Caco-2 (cell line): ENCODE measurements at regions of chr13 and their contacts with region 1.

Region 1: GRCh38 chr13:98842864-98843481 is 90.5 kb upstream of the SLC15A1 start:
- DNase-seq: peak; percentile 81 to 85
- H3K4me3 ChIP-seq: no peak overlapping the region
- H3K4me3 Mint-ChIP-seq: no peak overlapping the region
- H3K27ac Mint-ChIP-seq: no peak overlapping the region
- H3K4me1 ChIP-seq: peaks cover 6% of the 10 kb centered on the region; the same call in 1 of the 2 replicates
- H3K4me1 Mint-ChIP-seq: peaks cover 19% of the 10 kb centered on the region
- H3K27me3 ChIP-seq: no peaks in the 10 kb centered on the region
- H3K27me3 Mint-ChIP-seq: no peaks in the 10 kb centered on the region
- CTCF ChIP-seq: peak; percentile 89 to 94

Region 2: DNA sequence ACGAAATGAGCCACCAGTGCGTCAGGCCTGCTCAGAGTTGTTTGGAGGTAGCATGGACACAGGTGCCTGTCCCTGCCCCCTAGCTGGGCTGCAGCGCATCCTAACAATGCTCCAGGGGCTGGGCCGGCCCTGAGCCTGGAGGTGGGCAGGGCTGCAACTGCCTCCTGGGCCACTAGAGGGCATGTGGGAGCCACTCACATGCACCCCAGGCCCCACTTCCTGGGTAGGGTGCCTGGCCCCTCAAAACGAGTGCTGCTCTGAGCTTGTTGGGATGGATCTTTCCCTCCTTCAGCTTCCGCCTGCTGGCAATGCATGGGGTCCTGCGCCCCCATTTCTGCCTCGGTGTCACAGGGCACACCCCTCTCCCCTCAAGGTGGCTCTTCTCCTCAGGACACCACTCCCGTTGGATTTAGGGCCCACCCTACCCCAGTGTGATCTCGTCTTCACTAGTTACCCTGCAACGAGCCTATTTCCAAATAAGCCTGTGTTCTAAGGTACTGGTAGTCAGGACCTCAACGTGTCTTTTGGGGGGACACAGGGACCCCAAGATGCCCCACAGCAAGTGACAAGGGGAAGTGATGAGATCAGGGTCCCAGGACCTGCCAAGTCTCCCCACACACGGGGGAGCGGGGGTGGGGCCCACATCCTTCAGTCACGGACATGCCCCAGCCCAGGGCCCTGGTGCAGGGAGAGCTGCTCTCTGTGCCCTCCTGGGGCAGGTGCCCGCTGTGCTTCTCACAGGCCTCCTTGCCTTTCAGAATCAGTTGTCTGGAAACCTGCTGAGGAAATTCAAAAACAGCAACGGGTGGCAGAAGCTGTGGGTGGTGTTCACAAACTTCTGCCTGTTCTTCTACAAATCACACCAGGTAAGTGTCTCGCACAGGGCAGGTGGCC is 397.4 kb before region 1 on chr13:
- CTCF ChIA-PET with region 1: interaction called, 3 read pairs
- POLR2A ChIA-PET with region 1: no interaction called
- intact Hi-C with region 1: loop called (anchors 1 kb)
- DNase-seq: peak; percentile 77 to 88
- H3K4me3 ChIP-seq: no peak overlapping the region
- H3K4me3 Mint-ChIP-seq: no peak overlapping the region
- H3K27ac Mint-ChIP-seq: peak overlapping the region; percentile 77
- H3K4me1 ChIP-seq: no peaks in the 10 kb centered on the region
- H3K4me1 Mint-ChIP-seq: peaks cover 14% of the 10 kb centered on the region
- H3K27me3 ChIP-seq: no peaks in the 10 kb centered on the region
- H3K27me3 Mint-ChIP-seq: no peaks in the 10 kb centered on the region
- CTCF ChIP-seq: peak; percentile 97 to 99

Region 3: GRCh38 chr13:98556968-98557631 is 285.9 kb before region 1 on chr13:
- CTCF ChIA-PET with region 1: interaction called, 4 read pairs
- POLR2A ChIA-PET with region 1: no interaction called
- intact Hi-C with region 1: loop called (anchors 10 kb)
- DNase-seq: peak in 1 of 2 experiments; percentile 39
- H3K4me3 ChIP-seq: no peak overlapping the region
- H3K4me3 Mint-ChIP-seq: no peak overlapping the region
- H3K27ac Mint-ChIP-seq: peak overlapping the region; percentile 31
- H3K4me1 ChIP-seq: 0 out of 2 replicates have a peak, but pooled peaks cover 3% of the 10 kb centered on the region
- H3K4me1 Mint-ChIP-seq: peaks cover 42% of the 10 kb centered on the region
- H3K27me3 ChIP-seq: no peaks in the 10 kb centered on the region
- H3K27me3 Mint-ChIP-seq: no peaks in the 10 kb centered on the region
- CTCF ChIP-seq: peak in 1 of 2 experiments; percentile 22

Region 4: DNA sequence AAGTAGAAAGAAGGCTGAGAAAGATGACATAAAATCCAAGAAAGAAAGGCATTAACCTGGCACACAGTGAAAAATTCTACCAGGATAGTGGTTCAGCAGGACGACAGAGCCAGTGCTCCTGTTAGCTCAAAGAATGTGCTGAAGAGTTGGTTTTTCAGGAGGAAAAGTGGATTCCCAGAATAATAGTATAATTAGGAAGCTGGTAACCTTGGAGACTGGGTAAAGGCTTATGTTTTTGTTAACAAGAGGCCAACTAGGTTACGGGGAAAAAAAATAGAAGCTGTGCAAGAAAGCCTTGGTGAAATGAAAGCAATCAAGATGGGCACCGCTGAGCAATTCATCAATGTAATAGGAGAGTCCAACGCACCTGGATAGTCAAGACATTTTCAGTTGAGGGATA is 145.2 kb before region 1 on chr13:
- CTCF ChIA-PET with region 1: no interaction called
- POLR2A ChIA-PET with region 1: no interaction called
- intact Hi-C with region 1: no loop called
- DNase-seq: no peak
- H3K4me3 ChIP-seq: no peak overlapping the region
- H3K4me3 Mint-ChIP-seq: no peak overlapping the region
- H3K27ac Mint-ChIP-seq: no peak overlapping the region
- H3K4me1 ChIP-seq: no peaks in the 10 kb centered on the region
- H3K4me1 Mint-ChIP-seq: no peaks in the 10 kb centered on the region
- H3K27me3 ChIP-seq: no peaks in the 10 kb centered on the region
- H3K27me3 Mint-ChIP-seq: no peaks in the 10 kb centered on the region
- CTCF ChIP-seq: no peak

Region 5: DNA sequence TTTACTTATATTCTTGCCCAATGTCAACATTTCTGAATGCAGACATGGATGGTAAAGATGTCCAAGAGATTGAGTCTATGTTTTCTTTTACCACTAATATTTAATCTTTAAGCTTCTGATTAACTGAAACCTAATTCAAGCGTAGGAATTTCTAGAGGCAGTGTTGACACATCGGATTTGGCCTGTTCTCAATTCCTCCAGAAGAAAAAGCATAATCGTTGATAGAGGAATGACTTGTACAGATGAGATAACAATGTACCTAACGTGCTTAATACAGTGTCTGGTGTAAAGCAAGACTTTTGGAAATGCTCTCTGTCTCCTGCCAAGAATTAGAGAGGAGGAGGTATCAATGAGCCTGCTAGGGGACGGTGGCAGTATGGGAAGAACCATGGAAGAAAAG is 125.7 kb before region 1 on chr13:
- CTCF ChIA-PET with region 1: no interaction called
- POLR2A ChIA-PET with region 1: no interaction called
- intact Hi-C with region 1: no loop called
- DNase-seq: no peak
- H3K4me3 ChIP-seq: no peak overlapping the region
- H3K4me3 Mint-ChIP-seq: no peak overlapping the region
- H3K27ac Mint-ChIP-seq: no peak overlapping the region
- H3K4me1 ChIP-seq: no peaks in the 10 kb centered on the region
- H3K4me1 Mint-ChIP-seq: peaks cover 7% of the 10 kb centered on the region
- H3K27me3 ChIP-seq: no peaks in the 10 kb centered on the region
- H3K27me3 Mint-ChIP-seq: no peaks in the 10 kb centered on the region
- CTCF ChIP-seq: no peak

Region 6: GRCh38 chr13:98751861-98752466 is 91.0 kb before region 1 on chr13:
- CTCF ChIA-PET with region 1: no interaction called
- POLR2A ChIA-PET with region 1: no interaction called
- intact Hi-C with region 1: loop called (anchors 5 kb)
- DNase-seq: peak in 1 of 2 experiments; percentile 55
- H3K4me3 ChIP-seq: peak overlapping the region; percentile 81
- H3K4me3 Mint-ChIP-seq: peak overlapping the region; percentile 74
- H3K27ac Mint-ChIP-seq: peak overlapping the region; percentile 62
- H3K4me1 ChIP-seq: peaks cover 12% of the 10 kb centered on the region
- H3K4me1 Mint-ChIP-seq: peaks cover 14% of the 10 kb centered on the region
- H3K27me3 ChIP-seq: no peaks in the 10 kb centered on the region
- H3K27me3 Mint-ChIP-seq: peaks cover 3% of the 10 kb centered on the region
- CTCF ChIP-seq: no peak

Region 7: GRCh38 chr13:99033814-99034213 is 190.8 kb after region 1 on chr13:
- CTCF ChIA-PET with region 1: interaction called, 7 read pairs
- POLR2A ChIA-PET with region 1: no interaction called
- intact Hi-C with region 1: loop called (anchors 1 kb)
- DNase-seq: peak in 1 of 2 experiments; percentile 30
- H3K4me3 ChIP-seq: no peak overlapping the region
- H3K4me3 Mint-ChIP-seq: peak overlapping the region; percentile 24
- H3K27ac Mint-ChIP-seq: peak overlapping the region; percentile 79
- H3K4me1 ChIP-seq: peaks cover 37% of the 10 kb centered on the region
- H3K4me1 Mint-ChIP-seq: peaks cover 29% of the 10 kb centered on the region
- H3K27me3 ChIP-seq: no peaks in the 10 kb centered on the region
- H3K27me3 Mint-ChIP-seq: no peaks in the 10 kb centered on the region
- CTCF ChIP-seq: peak; percentile 54 to 56

Region 8: DNA sequence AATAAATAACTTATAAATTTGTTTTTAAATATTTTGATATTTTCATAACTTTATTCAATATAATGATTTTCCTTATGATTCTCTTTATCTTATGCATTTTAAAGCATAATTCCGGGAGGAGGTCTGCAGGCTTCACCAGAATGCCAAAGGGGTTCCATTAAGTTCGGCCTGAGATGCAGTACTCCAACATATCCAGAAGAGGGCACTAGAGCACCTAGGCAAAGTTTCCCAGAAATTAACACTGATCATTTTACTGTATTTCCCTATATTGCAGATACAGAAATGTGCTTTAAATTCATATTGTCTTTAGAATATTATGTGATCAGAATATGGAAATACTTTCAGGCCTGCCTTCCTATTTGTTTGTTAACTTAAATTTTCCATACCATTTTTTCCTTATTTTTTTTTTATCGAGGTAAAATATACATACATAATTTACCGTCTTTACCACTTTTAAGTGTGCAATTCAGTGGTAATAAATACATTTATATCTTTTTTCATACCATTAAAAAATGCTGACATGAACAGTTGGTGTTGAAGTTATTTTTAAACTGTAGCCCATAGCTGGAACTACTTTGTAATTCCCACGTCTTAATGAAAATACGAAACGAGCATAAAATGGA is 599.4 kb after region 1 on chr13:
- CTCF ChIA-PET with region 1: no interaction called
- POLR2A ChIA-PET with region 1: no interaction called
- intact Hi-C with region 1: no loop called
- DNase-seq: peak in 1 of 2 experiments; percentile 69
- H3K4me3 ChIP-seq: no peak overlapping the region
- H3K4me3 Mint-ChIP-seq: no peak overlapping the region
- H3K27ac Mint-ChIP-seq: no peak overlapping the region
- H3K4me1 ChIP-seq: no peaks in the 10 kb centered on the region
- H3K4me1 Mint-ChIP-seq: no peaks in the 10 kb centered on the region
- H3K27me3 ChIP-seq: no peaks in the 10 kb centered on the region
- H3K27me3 Mint-ChIP-seq: peaks cover 5% of the 10 kb centered on the region
- CTCF ChIP-seq: peak; percentile 92 to 95